PC-9 (cell line): ENCODE measurements at regions of chr1 and their contacts with region 1.

Region 1: DNA sequence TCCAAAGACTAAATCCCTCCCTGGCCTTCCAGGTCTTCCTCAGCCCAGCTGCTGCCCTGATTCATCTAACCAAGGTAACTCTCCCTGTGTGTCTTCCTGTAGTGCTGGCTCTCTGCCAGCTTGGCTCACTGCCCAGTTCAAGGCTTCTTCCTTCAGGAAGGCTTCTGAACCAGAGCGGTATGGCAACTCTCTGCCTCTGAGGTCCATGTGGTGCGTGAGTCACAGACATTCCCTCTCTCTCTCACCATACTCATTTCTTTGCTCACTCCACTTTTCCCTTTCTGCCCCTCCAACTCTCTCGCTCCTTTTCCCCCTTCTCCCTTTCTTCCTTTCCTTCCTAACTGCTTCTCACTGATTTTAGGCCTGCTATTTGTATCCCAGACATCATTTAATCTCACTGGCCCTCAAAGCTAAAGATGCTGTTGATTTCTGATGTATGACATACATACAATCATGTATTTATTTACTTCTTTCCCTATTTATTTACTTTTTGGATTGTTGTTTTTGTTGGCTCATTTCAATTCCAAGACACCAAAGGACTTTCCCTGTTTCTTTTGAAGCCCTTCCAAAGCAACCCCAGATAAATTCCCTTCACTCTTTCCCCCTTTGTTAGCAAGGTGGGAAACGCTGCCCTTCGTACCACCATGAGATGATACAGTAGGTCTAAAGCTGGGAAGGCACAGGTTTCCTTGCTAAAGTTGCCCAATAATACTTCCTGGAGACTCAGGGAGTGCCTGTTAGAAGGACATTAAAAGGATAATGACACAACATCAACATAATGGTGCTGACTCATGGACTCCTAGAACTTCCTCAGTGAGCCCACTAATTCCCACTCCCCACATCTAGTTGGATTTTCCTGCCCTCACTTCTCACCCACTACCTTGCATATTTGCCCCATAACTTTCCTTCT is 17.8 kb downstream of the CFAP45 start:
- DNase-seq: peak; percentile 97 to 98
- H3K4me3 ChIP-seq: peak overlapping the region; percentile 19; the same call in 1 of the 2 replicates
- H3K27ac ChIP-seq: peak overlapping the region; percentile 98
- H3K4me1 ChIP-seq: peaks cover 57% of the 10 kb centered on the region
- H3K27me3 ChIP-seq: no peaks in the 10 kb centered on the region
- CTCF ChIP-seq: no peak

Region 2: DNA sequence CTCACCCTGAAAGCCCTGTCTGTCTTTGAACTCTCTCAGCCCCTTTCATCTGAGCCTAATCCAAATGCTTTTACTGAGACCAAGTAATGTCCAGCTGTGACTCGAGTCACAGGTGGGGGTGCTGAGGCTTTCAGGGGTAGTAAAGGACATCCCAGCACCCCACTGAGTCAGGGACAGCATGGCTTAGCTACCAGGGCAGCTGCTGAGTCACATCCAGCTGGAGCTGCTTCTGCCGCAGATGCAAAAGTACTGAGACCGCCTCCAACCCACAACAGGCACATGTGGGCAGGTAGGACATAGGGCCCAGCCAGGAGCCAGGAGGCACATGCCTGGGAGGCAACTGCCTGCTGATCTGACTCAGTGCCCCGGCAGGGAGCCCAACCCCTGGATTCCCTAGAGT is 13.0 kb before region 1 on chr1:
- CTCF ChIA-PET with region 1: no interaction called
- POLR2A ChIA-PET with region 1: no interaction called
- intact Hi-C with region 1: loop called (anchors 1 kb)
- DNase-seq: peak; percentile 54 to 55
- H3K4me3 ChIP-seq: no peak overlapping the region
- H3K27ac ChIP-seq: no peak overlapping the region
- H3K4me1 ChIP-seq: peaks cover 17% of the 10 kb centered on the region
- H3K27me3 ChIP-seq: no peaks in the 10 kb centered on the region
- CTCF ChIP-seq: no peak

Region 3: GRCh38 chr1:160177231-160177630 is 295.0 kb after region 1 on chr1:
- CTCF ChIA-PET with region 1: no interaction called
- POLR2A ChIA-PET with region 1: no interaction called
- intact Hi-C with region 1: no loop called
- DNase-seq: no peak
- H3K4me3 ChIP-seq: no peak overlapping the region
- H3K27ac ChIP-seq: no peak overlapping the region
- H3K4me1 ChIP-seq: no peaks in the 10 kb centered on the region
- H3K27me3 ChIP-seq: peaks cover 14% of the 10 kb centered on the region
- CTCF ChIP-seq: no peak